OCI-LY7 (cell line): ENCODE measurements at regions of chr1 and their contacts with region 1.

Region 1: GRCh38 chr1:94396356-94397010 is 21.7 kb upstream of the ABCD3 start:
- DNase-seq: no peak
- H3K4me3 ChIP-seq: no peak overlapping the region
- H3K27ac ChIP-seq: no peak overlapping the region
- H3K4me1 ChIP-seq: no peaks in the 10 kb centered on the region
- CTCF ChIP-seq: peak; percentile 25; the same call in 1 of the 2 replicates

Region 2: GRCh38 chr1:94095112-94095637 is 301.3 kb before region 1 on chr1:
- CTCF ChIA-PET with region 1: no interaction called
- POLR2A ChIA-PET with region 1: no interaction called
- intact Hi-C with region 1: no loop called
- DNase-seq: no peak
- H3K4me3 ChIP-seq: no peak overlapping the region
- H3K27ac ChIP-seq: no peak overlapping the region
- H3K4me1 ChIP-seq: no peaks in the 10 kb centered on the region
- CTCF ChIP-seq: no peak

Region 3: DNA sequence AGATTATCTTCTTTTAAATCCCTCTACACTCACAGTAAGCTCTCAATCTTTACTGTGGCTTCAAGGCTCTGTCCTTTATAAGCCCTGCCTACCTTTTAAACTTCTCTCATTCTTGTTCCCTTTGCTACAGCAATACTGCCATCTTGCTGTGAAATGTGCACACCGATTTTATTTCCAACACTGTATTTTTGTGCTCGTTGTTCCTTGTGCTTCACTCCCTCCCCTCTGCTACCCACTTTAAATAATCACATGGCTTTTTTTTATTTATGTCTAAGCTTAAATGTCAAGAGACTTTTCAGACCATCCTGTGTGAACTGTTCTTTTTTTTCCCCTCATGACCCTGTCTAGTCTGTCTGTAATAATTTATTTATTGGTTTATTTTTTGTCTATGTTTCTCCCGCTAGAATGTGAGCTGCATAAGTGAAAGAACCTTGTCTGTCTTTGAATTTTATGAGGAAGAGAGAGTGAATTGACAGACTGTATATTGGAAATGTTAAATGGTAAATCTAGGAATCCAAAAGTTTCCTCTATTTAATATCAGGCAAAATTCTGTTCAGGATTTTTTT is 67.4 kb after region 1 on chr1:
- CTCF ChIA-PET with region 1: no interaction called
- POLR2A ChIA-PET with region 1: no interaction called
- intact Hi-C with region 1: loop called (anchors 1 kb)
- DNase-seq: peak; percentile 56
- H3K4me3 ChIP-seq: no peak overlapping the region
- H3K27ac ChIP-seq: no peak overlapping the region
- H3K4me1 ChIP-seq: peaks cover 12% of the 10 kb centered on the region
- CTCF ChIP-seq: peak; percentile 87